GM10248 (cell line): ENCODE measurements at regions of chr7 and their contacts with region 1.

Region 1: GRCh38 chr7:88218836-88219605 is 817 bp downstream of the SRI start:
- DNase-seq: peak; percentile 49
- CTCF ChIP-seq: no peak

Region 2: GRCh38 chr7:88206254-88206653 is 12.8 kb before region 1 on chr7:
- CTCF ChIA-PET with region 1: interaction called, 10 read pairs
- POLR2A ChIA-PET with region 1: no interaction called
- DNase-seq: no peak
- CTCF ChIP-seq: no peak

Region 3: DNA sequence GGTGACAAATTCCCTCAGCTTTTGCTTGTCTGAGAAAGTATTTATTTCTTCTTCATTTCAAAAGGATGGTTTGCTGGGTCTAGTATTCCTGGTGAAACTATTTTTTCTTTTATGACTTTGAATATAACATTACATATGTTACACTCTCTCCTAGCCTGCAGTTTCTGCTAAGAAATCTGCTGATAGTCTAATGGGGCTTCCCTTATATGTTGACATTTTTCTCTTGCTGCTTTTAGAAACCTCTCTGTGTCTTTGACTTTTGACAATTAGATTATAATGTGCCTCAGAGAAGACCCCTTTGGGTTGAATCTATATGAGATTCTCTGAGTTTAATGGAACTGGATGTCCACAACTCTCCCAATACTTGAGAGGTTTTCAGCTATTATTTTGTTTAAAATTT is 34.6 kb after region 1 on chr7:
- CTCF ChIA-PET with region 1: no interaction called
- POLR2A ChIA-PET with region 1: no interaction called
- DNase-seq: no peak
- CTCF ChIP-seq: no peak